ENCODE measurements at regions of chr17 and their contacts with region 1.

Region 1: DNA sequence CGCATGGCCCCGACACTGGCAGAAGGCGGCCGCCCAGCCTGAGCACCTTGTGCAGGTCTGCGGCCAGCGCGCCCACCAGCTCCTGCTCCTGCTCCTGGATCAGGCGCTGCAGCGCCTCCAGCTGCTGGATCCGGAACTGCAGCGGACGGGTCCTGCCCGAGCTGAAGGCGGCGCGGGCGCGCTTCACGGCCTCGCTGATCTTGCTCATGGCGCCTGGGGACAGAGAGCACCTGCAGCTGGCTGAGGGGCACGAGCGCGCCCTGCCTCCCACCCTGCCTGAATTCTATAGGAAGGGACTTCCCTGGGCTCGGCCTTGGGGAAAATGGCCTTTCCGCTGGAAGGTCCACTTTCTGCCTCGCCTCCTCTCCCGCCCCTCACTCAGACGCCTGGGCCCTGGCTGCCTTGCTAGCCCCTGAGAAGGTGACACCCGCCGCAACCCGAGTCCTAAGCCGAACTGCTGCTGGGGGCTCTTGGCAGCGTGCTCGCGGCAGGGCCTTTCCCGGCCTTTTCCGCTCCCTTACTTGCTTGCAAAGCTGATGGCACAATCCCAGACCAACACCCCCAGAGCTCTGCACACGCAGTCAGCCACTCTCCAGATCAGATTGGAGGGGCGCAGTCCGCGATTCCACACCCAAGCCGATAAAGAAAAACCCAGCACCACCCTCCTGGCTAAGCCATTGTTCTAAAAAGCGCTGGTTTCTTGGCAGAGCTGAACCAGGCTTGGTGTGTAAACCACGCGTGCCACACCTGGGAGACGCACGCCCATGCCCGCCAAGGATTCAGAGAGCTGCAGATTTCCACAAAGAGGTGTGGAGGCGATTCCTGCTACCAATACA is 3.0 kb downstream of the ALDH3A1 start:
- DNase-seq: peak; percentile 84
- H3K4me3 ChIP-seq: peak overlapping the region in 1 of 3 experiments; percentile 37
- H3K27ac ChIP-seq: no peak overlapping the region
- H3K4me1 ChIP-seq: peaks cover 5% of the 10 kb centered on the region
- H3K27me3 ChIP-seq: no peaks in the 10 kb centered on the region
- CTCF ChIP-seq: peak; percentile 90 to 99
- POLR2A ChIP-seq: no peak

Region 2: DNA sequence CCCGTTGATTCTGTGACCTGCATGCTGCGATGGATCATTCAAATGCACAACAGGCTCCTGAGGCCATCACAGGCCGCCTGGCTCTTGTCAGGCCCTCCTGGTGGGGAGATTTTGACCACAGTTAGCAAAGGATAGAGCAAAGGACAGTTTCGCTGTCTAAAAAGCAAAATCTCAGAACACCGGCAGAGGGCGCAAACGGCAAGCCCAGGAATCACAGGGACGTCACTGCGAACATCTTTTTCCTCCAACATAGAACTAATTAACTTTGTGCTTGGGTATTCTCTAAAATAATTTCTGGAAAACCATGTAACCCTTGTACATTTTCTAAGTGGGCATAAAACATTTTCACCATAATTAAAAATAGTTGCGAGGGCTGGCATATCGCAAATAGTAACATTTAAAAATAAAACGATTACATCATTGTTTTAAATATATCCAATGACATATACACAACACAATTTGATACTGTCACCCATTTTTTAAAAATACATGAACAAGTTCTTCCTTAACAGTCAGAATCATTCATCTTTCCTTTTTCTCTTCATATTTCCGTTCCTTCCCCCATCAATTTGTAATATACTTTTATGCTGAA is 231.1 kb before region 1 on chr17:
- CTCF ChIA-PET with region 1: interaction called, 12 read pairs
- POLR2A ChIA-PET with region 1: no interaction called
- dilution Hi-C with region 1: no loop called
- intact Hi-C with region 1: no loop called
- DNase-seq: peak; percentile 73
- H3K4me3 ChIP-seq: no peak overlapping the region
- H3K27ac ChIP-seq: no peak overlapping the region
- H3K4me1 ChIP-seq: no peaks in the 10 kb centered on the region
- H3K27me3 ChIP-seq: no peaks in the 10 kb centered on the region
- CTCF ChIP-seq: peak; percentile 81 to 90
- POLR2A ChIP-seq: no peak

Region 3: DNA sequence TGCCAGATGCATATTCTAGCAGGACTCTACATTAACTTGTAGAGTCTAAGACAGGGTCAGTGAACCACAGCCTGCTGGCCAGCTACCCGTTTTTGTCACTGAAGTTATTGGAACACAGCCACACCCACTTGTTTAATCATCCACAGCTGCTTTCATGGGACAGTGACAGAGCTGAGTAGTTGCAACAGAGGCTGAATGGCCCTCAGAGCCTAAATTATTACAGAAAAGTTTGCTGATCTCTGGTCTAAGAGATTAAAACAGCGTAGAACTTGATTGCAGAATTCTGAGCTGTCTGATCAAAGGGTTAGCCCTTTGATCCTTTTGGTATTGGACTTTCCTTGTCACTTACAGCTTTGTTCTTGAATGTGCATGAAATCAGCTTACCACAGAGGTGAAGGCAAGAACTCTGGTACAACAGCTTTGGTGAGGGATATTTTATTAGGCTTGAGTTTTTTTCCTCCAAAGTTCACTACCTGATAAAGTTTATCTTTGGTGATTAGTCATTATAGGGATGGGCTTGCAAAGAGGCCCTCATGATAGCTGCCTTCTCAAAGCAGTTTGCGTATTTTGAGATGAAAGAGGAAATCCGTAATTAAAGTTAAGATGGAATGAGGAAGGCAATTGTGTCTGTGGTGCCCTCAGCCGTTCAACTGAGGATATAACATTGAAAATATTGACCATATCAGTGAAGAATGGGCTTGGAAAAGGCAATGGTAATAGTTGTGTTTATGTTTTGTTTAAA is 73.0 kb before region 1 on chr17:
- CTCF ChIA-PET with region 1: interaction called, 11 read pairs
- POLR2A ChIA-PET with region 1: no interaction called
- dilution Hi-C with region 1: no loop called
- intact Hi-C with region 1: no loop called
- DNase-seq: peak; percentile 11
- H3K4me3 ChIP-seq: no peak overlapping the region
- H3K27ac ChIP-seq: no peak overlapping the region
- H3K4me1 ChIP-seq: no peaks in the 10 kb centered on the region
- H3K27me3 ChIP-seq: no peaks in the 10 kb centered on the region
- CTCF ChIP-seq: no peak
- POLR2A ChIP-seq: no peak

Region 4: GRCh38 chr17:19728079-19728495 is 17.1 kb before region 1 on chr17:
- CTCF ChIA-PET with region 1: interaction called, 36 read pairs
- POLR2A ChIA-PET with region 1: interaction called, 3 read pairs
- dilution Hi-C with region 1: no loop called
- intact Hi-C with region 1: no loop called
- DNase-seq: peak; percentile 89
- H3K4me3 ChIP-seq: no peak overlapping the region
- H3K27ac ChIP-seq: no peak overlapping the region
- H3K4me1 ChIP-seq: peaks cover 15% of the 10 kb centered on the region
- H3K27me3 ChIP-seq: no peaks in the 10 kb centered on the region
- CTCF ChIP-seq: no peak
- POLR2A ChIP-seq: no peak

Region 5: GRCh38 chr17:19733953-19734526 is 11.1 kb before region 1 on chr17:
- CTCF ChIA-PET with region 1: interaction called, 36 read pairs
- POLR2A ChIA-PET with region 1: no interaction called
- dilution Hi-C with region 1: no loop called
- intact Hi-C with region 1: no loop called
- DNase-seq: no peak
- H3K4me3 ChIP-seq: no peak overlapping the region
- H3K27ac ChIP-seq: no peak overlapping the region
- H3K4me1 ChIP-seq: no peaks in the 10 kb centered on the region
- H3K27me3 ChIP-seq: no peaks in the 10 kb centered on the region
- CTCF ChIP-seq: no peak
- POLR2A ChIP-seq: no peak

Measured in endothelial cell of umbilical vein (primary cell).